ENCODE measurements at regions of chr16 and their contacts with region 1.

Region 1: DNA sequence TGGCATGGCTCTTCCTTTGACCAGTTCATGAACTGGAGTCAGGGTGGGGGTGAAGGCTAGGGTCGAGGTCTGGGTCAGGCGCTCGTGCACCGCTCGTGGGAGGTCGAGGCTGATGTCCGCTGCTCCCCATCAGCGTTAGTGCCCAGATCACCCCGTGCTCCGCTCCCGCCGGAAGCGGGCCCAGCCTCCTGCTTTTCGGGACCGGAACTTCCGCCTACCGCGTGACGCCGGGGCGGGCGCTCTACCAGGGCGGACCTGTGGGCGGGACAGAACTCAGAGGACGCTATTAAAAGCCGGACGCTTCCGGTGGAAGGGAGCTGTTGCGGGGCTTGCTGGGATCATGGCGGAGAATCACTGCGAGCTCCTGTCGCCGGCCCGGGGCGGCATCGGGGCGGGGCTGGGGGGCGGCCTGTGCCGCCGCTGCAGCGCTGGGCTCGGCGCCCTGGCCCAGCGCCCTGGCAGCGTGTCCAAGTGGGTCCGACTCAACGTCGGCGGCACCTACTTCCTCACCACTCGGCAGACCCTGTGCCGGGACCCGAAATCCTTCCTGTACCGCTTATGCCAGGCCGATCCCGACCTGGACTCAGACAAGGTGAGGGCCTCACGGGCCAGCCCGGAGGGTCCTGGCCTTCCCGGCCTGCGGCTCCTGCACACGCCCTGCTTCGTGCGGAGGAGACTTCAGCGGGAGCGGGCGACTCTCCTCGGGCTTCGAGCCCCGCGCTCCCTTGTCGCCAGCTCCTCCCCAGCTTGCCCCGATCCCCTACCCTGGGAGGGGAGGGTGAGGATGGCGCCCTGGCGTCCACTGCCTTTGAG is at the start of gene KCTD5:
- DNase-seq: peak; percentile 74
- ATAC-seq: peak; percentile 81
- H3K4me3 ChIP-seq: peak within 1 kb of the TSS; percentile 94
- H3K27ac ChIP-seq: peak within 1 kb of the TSS; percentile 82
- H3K4me1 ChIP-seq: peaks cover 1% of the 10 kb centered on the region
- H3K27me3 ChIP-seq: no peaks in the 10 kb centered on the region
- CTCF ChIP-seq: no peak
- EP300 ChIP-seq: 0 out of 4 replicates have a peak, but pooled peaks of 1 of the 2 experiments have one; percentile 32
- POLR2A ChIP-seq: peak; percentile 95
- RAD21 ChIP-seq: no peak
- polyA plus RNA-seq, gene KCTD5: 0.58 to 3.0 TPM

Region 2: DNA sequence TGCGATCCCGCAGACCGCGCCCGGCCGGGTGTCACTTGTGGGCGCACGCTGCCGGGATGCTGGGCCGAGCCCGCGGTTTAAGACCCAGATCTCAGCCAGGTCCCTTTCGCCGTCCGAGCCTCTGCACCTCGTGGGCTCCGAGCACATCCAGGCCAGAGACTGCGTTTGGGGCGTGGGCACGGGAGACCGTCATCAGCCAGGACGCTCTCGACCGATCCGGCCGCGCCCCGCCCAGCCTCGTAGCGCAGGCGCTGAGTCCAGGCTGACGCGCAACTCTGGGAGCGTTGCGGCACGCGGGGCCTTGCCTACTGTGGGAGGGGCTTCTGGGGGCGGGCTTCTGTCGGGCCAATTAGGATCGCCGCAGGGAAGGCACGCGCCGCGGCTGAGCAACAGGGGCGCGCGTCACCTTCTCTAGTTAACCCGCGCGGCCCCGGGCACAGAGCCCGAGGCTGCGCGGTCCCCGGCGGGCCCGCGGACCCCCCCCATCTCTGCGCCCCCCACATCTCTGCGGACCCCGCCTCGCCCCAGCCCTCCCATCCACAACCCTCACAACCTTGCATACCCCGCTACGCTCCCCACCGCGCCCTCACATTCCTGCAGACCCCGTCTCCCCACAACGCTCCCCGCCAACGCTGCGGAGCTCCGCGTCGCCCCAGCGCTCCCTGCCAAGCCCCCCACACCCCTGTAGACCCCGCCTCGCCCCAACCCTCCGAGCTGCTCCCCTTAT is 150.5 kb before region 1 on chr16:
- CTCF ChIA-PET with region 1: no interaction called
- POLR2A ChIA-PET with region 1: no interaction called
- RAD21 ChIA-PET with region 1: no interaction called
- SMC1A ChIA-PET with region 1: no interaction called
- in situ Hi-C with region 1: no loop called
- intact Hi-C with region 1: loop called (anchors 10 kb)
- DNase-seq: peak; percentile 84
- ATAC-seq: peak; percentile 96
- H3K4me3 ChIP-seq: peak overlapping the region; percentile 95
- H3K27ac ChIP-seq: peak overlapping the region; percentile 89
- H3K4me1 ChIP-seq: peaks cover 13% of the 10 kb centered on the region
- H3K27me3 ChIP-seq: no peaks in the 10 kb centered on the region
- CTCF ChIP-seq: no peak
- EP300 ChIP-seq: no peak
- POLR2A ChIP-seq: peak; percentile 86
- RAD21 ChIP-seq: no peak

Region 3: GRCh38 chr16:2610781-2611498 is 71.5 kb before region 1 on chr16:
- CTCF ChIA-PET with region 1: no interaction called
- POLR2A ChIA-PET with region 1: no interaction called
- RAD21 ChIA-PET with region 1: no interaction called
- SMC1A ChIA-PET with region 1: no interaction called
- in situ Hi-C with region 1: no loop called
- intact Hi-C with region 1: no loop called
- DNase-seq: no peak
- ATAC-seq: no peak
- H3K4me3 ChIP-seq: no peak overlapping the region
- H3K27ac ChIP-seq: no peak overlapping the region
- H3K4me1 ChIP-seq: peaks cover 5% of the 10 kb centered on the region
- H3K27me3 ChIP-seq: no peaks in the 10 kb centered on the region
- CTCF ChIP-seq: no peak
- EP300 ChIP-seq: no peak
- POLR2A ChIP-seq: no peak
- RAD21 ChIP-seq: no peak

Region 4: DNA sequence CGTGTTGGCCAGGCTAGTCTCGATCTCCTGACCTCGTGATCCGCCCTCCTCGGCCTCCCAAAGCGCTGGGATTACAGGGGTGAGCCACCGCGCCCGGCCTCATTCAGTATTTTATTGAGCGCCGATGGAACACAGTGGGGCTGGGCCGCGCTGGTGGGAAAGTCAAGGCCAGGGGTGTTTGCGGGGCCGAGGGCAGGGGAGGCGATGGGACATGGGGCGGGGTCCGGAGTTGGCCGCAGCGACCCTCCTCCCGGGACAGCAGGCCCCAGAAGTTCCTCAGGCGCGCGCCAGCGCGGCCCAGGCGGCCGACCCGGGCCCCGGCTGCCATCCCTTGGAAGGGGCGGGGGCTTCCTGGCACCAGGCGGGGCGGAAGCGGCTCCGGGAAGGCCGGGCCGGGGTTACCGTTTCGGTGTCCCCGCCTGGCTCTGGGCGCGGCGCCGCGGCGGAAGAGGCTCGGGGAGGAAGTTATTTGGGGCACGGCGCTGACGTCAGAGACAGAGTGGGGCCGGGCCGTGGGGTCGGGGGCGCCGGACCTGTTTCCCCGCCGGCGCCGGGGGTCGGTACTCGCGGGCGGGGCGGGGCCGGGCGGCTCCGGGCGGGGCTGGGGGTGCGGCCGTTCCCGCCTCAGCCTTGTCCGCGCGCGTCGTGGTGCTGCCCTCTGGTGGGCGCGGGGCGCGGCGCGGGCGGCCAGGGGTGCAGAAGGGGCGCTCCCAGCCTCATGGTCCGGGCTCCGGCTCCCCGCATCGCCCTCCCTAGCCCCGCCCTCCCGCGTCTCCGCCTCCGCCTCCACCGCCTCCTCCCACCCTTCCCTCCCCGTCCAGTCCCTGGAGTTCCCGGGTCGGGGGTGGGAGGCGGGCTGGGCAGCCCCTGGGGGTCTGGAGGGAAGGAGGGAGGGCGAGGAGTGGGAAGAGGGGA is 38.6 kb after region 1 on chr16:
- CTCF ChIA-PET with region 1: interaction called, 3 read pairs
- POLR2A ChIA-PET with region 1: no interaction called
- RAD21 ChIA-PET with region 1: interaction called, 4 read pairs
- SMC1A ChIA-PET with region 1: interaction called, 3 read pairs
- in situ Hi-C with region 1: no loop called
- intact Hi-C with region 1: loop called (anchors 2 kb)
- DNase-seq: peak; percentile 36
- ATAC-seq: peak; percentile 94
- H3K4me3 ChIP-seq: peak overlapping the region; percentile 84
- H3K27ac ChIP-seq: peak overlapping the region; percentile 39
- H3K4me1 ChIP-seq: 0 out of 2 replicates have a peak, but pooled peaks cover 6% of the 10 kb centered on the region
- H3K27me3 ChIP-seq: no peaks in the 10 kb centered on the region; a peak in 1 of 4 replicates
- CTCF ChIP-seq: peak; percentile 28 to 74 (median 58); a peak in 4 of 6 replicates
- EP300 ChIP-seq: no peak
- POLR2A ChIP-seq: peak; percentile 73
- RAD21 ChIP-seq: peak; percentile 56